ENCODE measurements at regions of chr11 and their contacts with region 1.

Region 1: DNA sequence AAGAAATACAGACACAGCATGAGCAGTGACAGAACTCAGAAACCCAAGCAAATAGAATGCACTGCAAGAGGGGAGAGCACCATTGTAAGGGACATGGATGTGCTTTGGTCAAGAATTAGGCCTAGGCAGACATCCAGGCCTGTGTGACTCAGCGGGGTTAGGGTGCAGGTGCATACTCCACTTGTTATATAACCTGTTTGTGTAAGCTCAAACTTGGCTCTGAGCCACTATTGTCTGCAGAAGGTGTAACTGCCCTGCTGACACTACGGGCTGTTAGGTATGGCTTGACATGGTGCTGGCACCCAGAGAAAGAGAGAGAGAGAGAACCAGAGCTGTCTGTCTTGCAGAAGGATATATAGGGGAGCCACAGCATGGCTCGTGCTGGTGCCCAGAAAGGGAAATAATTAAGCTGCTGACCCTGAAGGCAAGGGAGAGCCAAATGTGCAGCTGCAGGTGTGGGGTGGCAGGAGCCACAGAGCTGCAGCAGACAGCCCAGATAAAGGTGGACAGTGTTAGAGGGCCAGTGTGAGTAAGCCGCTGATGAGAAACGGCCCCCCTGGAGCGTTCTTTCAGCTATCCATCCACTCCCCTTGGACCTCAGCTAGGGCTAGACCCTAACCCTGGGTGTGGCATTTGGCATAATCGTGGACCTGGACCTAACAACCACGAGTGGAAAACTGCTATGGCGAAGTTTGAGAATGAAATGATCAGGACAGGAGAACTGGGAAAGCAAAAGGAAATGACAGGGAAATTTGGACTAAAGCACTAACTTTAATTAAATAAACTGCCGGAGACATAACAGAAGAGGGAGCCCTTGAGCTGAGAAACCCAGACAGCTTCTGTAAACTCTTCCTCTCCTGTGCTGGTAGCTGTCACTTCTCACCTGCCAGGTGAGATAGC is 253.0 kb upstream of the CCDC179 start:
- DNase-seq: peak; percentile 43
- CTCF ChIP-seq: peak; percentile 48

Region 2: DNA sequence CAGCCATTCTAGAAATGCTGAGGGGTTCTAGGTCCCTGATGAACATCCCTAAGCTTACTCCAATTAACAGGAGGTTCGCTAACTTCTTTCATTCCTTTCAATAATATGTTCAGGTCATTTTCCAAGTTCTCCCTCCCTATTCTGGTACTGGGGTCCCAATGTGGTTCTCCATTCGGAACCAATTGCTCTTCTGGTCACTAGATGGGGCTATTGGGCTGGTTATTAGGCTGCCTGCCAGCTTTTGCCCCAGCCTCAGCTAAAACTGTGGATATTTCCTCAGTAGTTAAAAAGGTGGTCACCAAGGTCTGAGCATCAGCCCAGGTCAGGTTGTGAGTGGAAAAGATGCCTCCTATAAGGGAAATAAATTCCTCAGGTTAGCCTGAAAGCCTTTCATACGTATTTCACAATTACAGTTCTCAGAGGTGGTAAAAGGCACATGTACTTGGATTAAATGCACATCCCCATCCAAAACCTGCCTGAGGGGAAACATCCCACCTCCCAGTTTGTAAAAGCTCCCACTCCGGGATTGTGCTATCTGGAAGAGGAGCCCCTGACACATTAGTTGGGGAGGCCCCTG is 91.9 kb before region 1 on chr11:
- CTCF ChIA-PET with region 1: interaction called, 10 read pairs
- POLR2A ChIA-PET with region 1: no interaction called
- DNase-seq: peak; percentile 43
- CTCF ChIP-seq: peak; percentile 58

Region 3: DNA sequence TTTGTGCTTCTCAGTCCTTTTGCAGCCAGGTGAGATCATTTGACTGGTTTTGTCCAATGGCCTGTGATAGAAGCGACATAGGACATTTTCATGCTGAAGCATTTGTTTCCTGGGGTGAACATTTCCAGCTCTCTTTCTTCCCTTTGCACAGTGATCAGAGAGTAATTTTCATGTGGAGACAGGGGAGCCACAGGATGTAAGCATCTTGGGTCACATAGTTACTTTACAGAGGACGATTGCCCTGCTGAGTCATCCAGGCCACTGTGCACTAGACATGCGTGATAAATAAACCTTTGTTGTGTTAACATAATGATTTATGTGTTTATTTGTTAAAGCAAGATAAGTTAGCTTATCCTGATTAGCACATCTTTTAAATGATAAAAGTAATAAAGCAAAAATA is 10.5 kb after region 1 on chr11:
- CTCF ChIA-PET with region 1: interaction called, 20 read pairs
- POLR2A ChIA-PET with region 1: no interaction called
- DNase-seq: no peak
- CTCF ChIP-seq: no peak